ENCODE measurements at regions of chr17 and their contacts with region 1.

Region 1: GRCh38 chr17:41966463-41967140 is at the start of gene CNP:
- DNase-seq: peak; percentile 92 to 96
- H3K4me3 ChIP-seq: peak within 1 kb of the TSS; percentile 83
- H3K4me3 Mint-ChIP-seq: peak within 1 kb of the TSS; percentile 79
- H3K27ac Mint-ChIP-seq: peak within 1 kb of the TSS; percentile 0
- H3K4me1 ChIP-seq: peaks cover 20% of the 10 kb centered on the region
- H3K4me1 Mint-ChIP-seq: peaks cover 23% of the 10 kb centered on the region
- H3K27me3 ChIP-seq: no peaks in the 10 kb centered on the region
- H3K27me3 Mint-ChIP-seq: no peaks in the 10 kb centered on the region
- CTCF ChIP-seq: no peak
- total RNA-seq, gene CNP: 90.1 and 94.5 TPM in 2 replicates

Region 2: GRCh38 chr17:41873559-41874292 is 92.9 kb before region 1 on chr17:
- CTCF ChIA-PET with region 1: no interaction called
- POLR2A ChIA-PET with region 1: no interaction called
- intact Hi-C with region 1: no loop called
- DNase-seq: no peak
- H3K4me3 ChIP-seq: no peak overlapping the region
- H3K4me3 Mint-ChIP-seq: no peak overlapping the region
- H3K27ac Mint-ChIP-seq: no peak overlapping the region
- H3K4me1 ChIP-seq: 0 out of 2 replicates have a peak, but pooled peaks cover 5% of the 10 kb centered on the region
- H3K4me1 Mint-ChIP-seq: no peaks in the 10 kb centered on the region
- H3K27me3 ChIP-seq: no peaks in the 10 kb centered on the region
- H3K27me3 Mint-ChIP-seq: no peaks in the 10 kb centered on the region
- CTCF ChIP-seq: no peak

Region 3: DNA sequence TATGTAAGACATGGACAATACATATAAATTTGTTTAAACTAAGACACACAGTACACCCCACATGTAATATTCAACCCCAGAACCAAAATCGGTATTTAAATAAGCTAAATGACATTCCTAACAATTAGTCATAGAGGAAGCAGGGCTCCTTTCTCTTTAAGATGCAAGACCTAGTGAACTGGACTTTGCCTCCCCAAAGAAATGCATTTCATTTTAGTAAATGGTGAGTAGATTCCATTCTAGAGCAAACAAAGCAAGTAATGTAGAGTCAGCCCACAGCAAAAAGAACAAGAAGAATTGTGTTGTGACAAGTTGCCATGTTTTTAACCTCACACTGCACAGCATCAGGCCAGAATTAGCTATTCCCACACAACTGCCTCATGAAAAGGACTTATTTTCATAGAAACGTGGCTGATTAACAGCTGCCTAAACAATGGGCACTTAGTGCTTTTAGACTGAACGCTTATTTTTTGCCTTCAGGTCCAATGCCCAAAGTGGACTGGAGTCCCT is 36.2 kb after region 1 on chr17:
- CTCF ChIA-PET with region 1: interaction called, 5 read pairs
- POLR2A ChIA-PET with region 1: interaction called, 5 read pairs
- intact Hi-C with region 1: loop called (anchors 2 kb)
- DNase-seq: peak in 1 of 2 experiments; percentile 67
- H3K4me3 ChIP-seq: 0 out of 2 replicates have a peak overlapping the region, but pooled peaks have one; percentile 1
- H3K4me3 Mint-ChIP-seq: peak overlapping the region; percentile 68
- H3K27ac Mint-ChIP-seq: peak overlapping the region; percentile 92
- H3K4me1 ChIP-seq: peaks cover 49% of the 10 kb centered on the region
- H3K4me1 Mint-ChIP-seq: peaks cover 26% of the 10 kb centered on the region
- H3K27me3 ChIP-seq: no peaks in the 10 kb centered on the region
- H3K27me3 Mint-ChIP-seq: no peaks in the 10 kb centered on the region
- CTCF ChIP-seq: no peak